ENCODE measurements at regions of chr17 and their contacts with region 1.

Region 1: GRCh38 chr17:77963441-77963840 is 4.9 kb downstream of the TNRC6C start:
- DNase-seq: peak in 4 of 5 donors; percentile 65 to 77 (median 72)
- ATAC-seq: peak; percentile 66 to 85 (median 78)
- H3K4me3 ChIP-seq: peak overlapping the region in 1 of 12 donors; percentile 19
- H3K27ac ChIP-seq: peak overlapping the region in 7 of 12 donors; percentile 0 to 55 (median 20)
- H3K4me1 ChIP-seq: peaks cover 6 to 78% (median 57%) of the 10 kb centered on the region in 12 donors
- H3K27me3 ChIP-seq: peaks cover 0 to 4% (median 0%) of the 10 kb centered on the region in 9 donors
- CTCF ChIP-seq: no peak
- POLR2A ChIP-seq: no peak

Region 2: DNA sequence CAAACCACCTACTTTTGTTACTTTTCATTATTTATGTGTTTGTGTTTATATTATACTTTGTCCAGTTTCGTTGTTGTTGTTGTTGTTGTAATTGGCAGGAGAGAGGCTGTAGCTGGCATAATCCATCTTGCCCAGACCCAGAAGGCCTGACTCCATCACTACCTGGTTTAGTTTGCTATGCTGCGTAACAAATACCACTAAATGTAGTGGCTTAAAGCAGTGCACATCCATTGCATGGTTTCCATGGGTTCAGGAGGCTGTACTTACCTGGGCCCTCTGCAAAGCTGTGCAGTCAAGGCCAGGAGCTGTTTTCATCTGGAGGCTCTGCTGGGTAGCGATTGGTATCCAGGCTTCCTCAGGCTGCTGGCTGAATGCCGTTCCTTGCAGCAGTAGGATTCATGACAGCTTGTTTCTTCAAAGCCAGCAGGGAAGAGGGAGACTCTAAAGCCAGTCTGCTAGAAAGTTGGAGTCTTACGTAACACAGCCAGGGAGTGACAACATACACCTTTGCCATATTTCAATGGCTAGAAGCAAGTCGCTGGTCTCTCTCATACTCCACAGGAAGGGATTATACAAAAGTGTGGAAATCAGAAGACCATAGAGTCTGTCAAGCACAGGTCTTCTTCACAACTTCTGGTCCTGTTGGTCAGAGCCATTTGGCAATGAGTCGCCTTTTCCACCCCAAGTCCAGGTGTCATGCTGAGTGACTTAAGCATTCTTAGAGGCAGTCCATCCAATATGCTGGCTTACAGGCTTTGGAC is 36.2 kb after region 1 on chr17:
- intact Hi-C with region 1: loop called in 6 of 10 experiments (anchors 5 kb)
- DNase-seq: no peak
- ATAC-seq: no peak
- H3K4me3 ChIP-seq: no peak overlapping the region
- H3K27ac ChIP-seq: peak overlapping the region in 1 of 12 donors; percentile 28
- H3K4me1 ChIP-seq: peaks cover 0 to 66% (median 42%) of the 10 kb centered on the region in 12 donors
- H3K27me3 ChIP-seq: no peaks in the 10 kb centered on the region
- CTCF ChIP-seq: no peak
- POLR2A ChIP-seq: no peak

Region 3: GRCh38 chr17:78013683-78014467 is 50.4 kb after region 1 on chr17:
- intact Hi-C with region 1: loop called in 1 of 10 experiments (anchors 5 kb)
- DNase-seq: peak in 3 of 5 donors; percentile 35 to 54 (median 35)
- ATAC-seq: peak; percentile 18 to 66 (median 56)
- H3K4me3 ChIP-seq: no peak overlapping the region
- H3K27ac ChIP-seq: peak overlapping the region in 1 of 12 donors; percentile 6
- H3K4me1 ChIP-seq: peaks cover 0 to 19% (median 6%) of the 10 kb centered on the region in 12 donors
- H3K27me3 ChIP-seq: no peaks in the 10 kb centered on the region
- CTCF ChIP-seq: peak; percentile 32 to 91 (median 77)
- POLR2A ChIP-seq: no peak

Measured in heart left ventricle (tissue), 16 donors.